CD14-positive monocyte (primary cell): ENCODE measurements at regions of chr11 and their contacts with region 1.

Region 1: DNA sequence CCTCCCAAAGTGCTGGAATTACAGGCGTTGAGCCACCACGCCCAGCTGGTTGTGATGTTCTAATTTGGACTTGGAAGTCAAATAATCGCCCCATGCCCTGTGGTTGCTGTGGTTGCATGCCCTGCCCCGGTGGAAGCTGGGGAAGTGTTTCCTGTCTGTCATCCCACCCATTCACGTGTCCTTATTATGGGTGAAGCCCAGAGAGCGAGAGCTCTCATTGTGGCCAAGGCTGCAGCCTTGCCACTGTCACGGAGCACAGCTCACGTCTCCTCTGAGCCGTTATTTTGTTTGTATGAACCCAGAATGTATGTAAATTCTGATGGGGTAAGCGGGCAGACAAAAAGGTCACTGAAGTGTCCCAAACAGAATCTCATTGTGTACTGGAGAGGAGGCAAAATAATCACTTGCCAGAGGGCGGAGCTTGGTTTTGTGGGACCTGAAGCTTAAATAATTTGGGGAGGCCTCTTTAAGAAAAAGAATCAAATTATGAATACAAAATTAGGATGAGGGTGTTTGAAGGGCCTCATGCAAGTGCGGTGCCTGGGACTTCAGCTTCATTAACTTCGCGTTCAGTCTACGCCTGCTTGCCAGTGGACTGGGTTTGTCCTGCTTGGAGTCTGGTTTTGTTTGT is 25.8 kb upstream of the TREH start:
- DNase-seq: peak; percentile 58 to 73 (median 71)
- H3K4me3 ChIP-seq: peak overlapping the region in 1 of 3 experiments; percentile 28
- H3K4me3 Mint-ChIP-seq: peak overlapping the region; percentile 59 to 69
- H3K27ac ChIP-seq: peak overlapping the region; percentile 39 to 59
- H3K27ac Mint-ChIP-seq: peak overlapping the region; percentile 68 to 90 (median 85)
- H3K4me1 ChIP-seq: peaks cover 58 to 63% of the 10 kb centered on the region in 2 donors
- H3K4me1 Mint-ChIP-seq: peaks cover 48% of the 10 kb centered on the region
- H3K27me3 ChIP-seq: no peaks in the 10 kb centered on the region
- H3K27me3 Mint-ChIP-seq: peaks cover 16 to 29% (median 22%) of the 10 kb centered on the region in 3 donors
- CTCF ChIP-seq: no peak

Region 2: GRCh38 chr11:118791111-118791965 is 86.1 kb after region 1 on chr11 and contains the start of gene DDX6:
- intact Hi-C with region 1: loop called in 1 of 2 experiments (anchors 10 kb)
- DNase-seq: peak; percentile 84 to 89 (median 86)
- H3K4me3 ChIP-seq: peak within 1 kb of the TSS; percentile 89 to 99 (median 96)
- H3K4me3 Mint-ChIP-seq: peak within 1 kb of the TSS; percentile 97 to 99
- H3K27ac ChIP-seq: peak within 1 kb of the TSS; percentile 98 to 99
- H3K27ac Mint-ChIP-seq: peak within 1 kb of the TSS; percentile 99
- H3K4me1 ChIP-seq: peaks cover 21 to 46% of the 10 kb centered on the region in 2 donors
- H3K4me1 Mint-ChIP-seq: peaks cover 34% of the 10 kb centered on the region
- H3K27me3 ChIP-seq: no peaks in the 10 kb centered on the region
- H3K27me3 Mint-ChIP-seq: peaks cover 0 to 4% (median 4%) of the 10 kb centered on the region in 3 donors
- CTCF ChIP-seq: no peak
- polyA plus RNA-seq, gene DDX6: 17.8 to 31.9 (median 28.0) TPM